Activated CD8-positive, alpha-beta T cell treated with anti-CD3 and anti-CD28 coated beads for 36 hours (primary cell): ENCODE measurements at regions of chr1 and their contacts with region 1.

Region 1: DNA sequence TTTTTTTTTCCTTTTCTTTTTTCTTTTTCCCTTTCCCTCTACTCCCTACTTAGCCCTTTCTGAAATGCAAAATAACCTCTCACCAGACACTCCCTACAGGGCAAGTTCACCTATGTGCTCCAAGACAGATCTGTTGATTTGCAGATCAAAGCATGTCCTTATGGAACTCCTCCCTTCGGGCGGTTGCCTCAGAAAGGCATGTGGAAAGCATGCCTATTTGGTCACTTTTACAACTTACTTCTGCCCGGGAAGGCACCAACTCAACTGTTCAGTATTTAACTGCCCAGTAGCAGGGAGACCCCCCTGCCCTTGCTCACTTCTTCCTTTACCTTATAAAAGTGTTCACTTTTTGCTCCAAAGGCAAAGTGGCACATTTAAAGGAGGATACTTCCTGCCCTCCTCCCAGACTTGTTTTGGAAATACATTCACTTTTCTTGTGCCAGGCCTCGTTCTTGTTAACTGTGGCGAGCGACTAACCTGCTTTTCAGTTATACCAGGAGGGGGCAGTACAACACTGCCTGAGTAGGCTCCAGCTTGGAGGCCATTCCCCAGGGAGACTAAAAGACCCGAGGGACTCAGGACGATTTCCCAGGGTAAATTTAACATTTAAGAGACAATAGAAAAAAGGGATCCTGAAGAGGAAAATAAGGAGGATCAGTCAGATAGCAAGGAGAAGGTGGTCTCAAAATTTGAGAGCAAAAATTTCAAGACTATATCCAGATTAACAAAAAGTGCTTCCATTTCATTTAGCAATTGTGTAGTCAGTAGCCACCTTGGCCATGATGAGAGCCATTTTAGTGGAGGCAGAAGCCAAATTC is 12.3 kb upstream of the SLAMF7 start:
- DNase-seq: peak; percentile 74
- ATAC-seq: peak; percentile 79
- H3K4me3 Mint-ChIP-seq: no peak overlapping the region
- H3K27ac Mint-ChIP-seq: no peak overlapping the region
- H3K4me1 Mint-ChIP-seq: peaks cover 32% of the 10 kb centered on the region
- H3K27me3 Mint-ChIP-seq: no peaks in the 10 kb centered on the region
- CTCF ChIP-seq: peak; percentile 99

Region 2: GRCh38 chr1:160675641-160676410 is 50.9 kb before region 1 on chr1:
- CTCF ChIA-PET with region 1: interaction called, 82 read pairs
- POLR2A ChIA-PET with region 1: interaction called, 3 read pairs
- intact Hi-C with region 1: loop called (anchors 5 kb)
- DNase-seq: peak; percentile 88
- ATAC-seq: peak; percentile 85
- H3K4me3 Mint-ChIP-seq: no peak overlapping the region
- H3K27ac Mint-ChIP-seq: peak overlapping the region; percentile 73
- H3K4me1 Mint-ChIP-seq: peaks cover 30% of the 10 kb centered on the region
- H3K27me3 Mint-ChIP-seq: no peaks in the 10 kb centered on the region
- CTCF ChIP-seq: peak; percentile 73

Region 3: DNA sequence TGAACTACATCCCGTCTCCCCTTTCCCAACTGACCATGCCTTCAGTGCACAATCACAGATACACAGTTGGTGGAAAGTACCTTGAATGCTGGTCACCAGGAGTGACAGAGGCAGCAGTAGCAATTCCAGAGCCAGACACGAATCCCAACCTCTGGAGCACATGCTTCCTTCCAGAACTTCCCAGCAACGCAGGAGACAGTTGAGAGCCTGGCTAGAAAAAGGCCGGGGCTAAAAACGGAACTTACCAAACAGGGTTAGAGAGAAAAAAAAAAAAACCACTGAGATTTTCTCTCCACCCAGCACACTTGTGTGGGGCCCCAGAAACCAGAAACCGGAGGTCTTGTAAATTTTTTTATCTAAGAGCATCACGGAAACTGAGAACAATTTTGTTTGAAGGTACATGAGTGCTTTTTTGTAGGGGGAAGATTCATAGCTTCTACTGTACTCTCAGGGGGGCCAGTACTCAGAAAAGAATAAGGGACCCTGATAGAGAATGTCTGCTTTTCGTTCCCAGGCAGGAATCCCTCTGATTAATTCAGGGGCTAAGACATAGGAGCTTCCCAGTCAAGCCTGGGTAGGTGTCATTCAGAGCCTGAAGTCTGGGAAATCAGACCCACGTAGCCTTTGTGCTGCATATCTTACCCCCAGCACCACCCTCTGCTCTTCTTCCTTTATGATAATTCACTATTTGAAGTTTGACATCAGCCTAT is 14.9 kb before region 1 on chr1 and contains the start of gene CD48:
- CTCF ChIA-PET with region 1: interaction called, 94 read pairs
- POLR2A ChIA-PET with region 1: interaction called, 21 read pairs
- intact Hi-C with region 1: no loop called
- DNase-seq: peak; percentile 75
- ATAC-seq: peak; percentile 37
- H3K4me3 Mint-ChIP-seq: no peak within 1 kb of the TSS
- H3K27ac Mint-ChIP-seq: no peak within 1 kb of the TSS
- H3K4me1 Mint-ChIP-seq: peaks cover 37% of the 10 kb centered on the region
- H3K27me3 Mint-ChIP-seq: no peaks in the 10 kb centered on the region
- CTCF ChIP-seq: no peak
- total RNA-seq, gene CD48: 379 to 388 TPM

Region 4: GRCh38 chr1:160748181-160748877 is 21.6 kb after region 1 on chr1:
- CTCF ChIA-PET with region 1: interaction called, 16 read pairs
- POLR2A ChIA-PET with region 1: interaction called, 18 read pairs
- intact Hi-C with region 1: no loop called
- DNase-seq: no peak
- ATAC-seq: no peak
- H3K4me3 Mint-ChIP-seq: no peak overlapping the region
- H3K27ac Mint-ChIP-seq: peak overlapping the region; percentile 94
- H3K4me1 Mint-ChIP-seq: peaks cover 95% of the 10 kb centered on the region
- H3K27me3 Mint-ChIP-seq: no peaks in the 10 kb centered on the region
- CTCF ChIP-seq: peak; percentile 43

Region 5: GRCh38 chr1:160830321-160831153 is 103.8 kb after region 1 on chr1:
- CTCF ChIA-PET with region 1: interaction called, 72 read pairs
- POLR2A ChIA-PET with region 1: no interaction called
- intact Hi-C with region 1: loop called (anchors 2 kb)
- DNase-seq: peak; percentile 89
- ATAC-seq: peak; percentile 84
- H3K4me3 Mint-ChIP-seq: no peak overlapping the region
- H3K27ac Mint-ChIP-seq: peak overlapping the region; percentile 62
- H3K4me1 Mint-ChIP-seq: peaks cover 34% of the 10 kb centered on the region
- H3K27me3 Mint-ChIP-seq: no peaks in the 10 kb centered on the region
- CTCF ChIP-seq: peak; percentile 68